GM12878 (cell line): ENCODE measurements at regions of chr14 and their contacts with region 1.

Region 1: DNA sequence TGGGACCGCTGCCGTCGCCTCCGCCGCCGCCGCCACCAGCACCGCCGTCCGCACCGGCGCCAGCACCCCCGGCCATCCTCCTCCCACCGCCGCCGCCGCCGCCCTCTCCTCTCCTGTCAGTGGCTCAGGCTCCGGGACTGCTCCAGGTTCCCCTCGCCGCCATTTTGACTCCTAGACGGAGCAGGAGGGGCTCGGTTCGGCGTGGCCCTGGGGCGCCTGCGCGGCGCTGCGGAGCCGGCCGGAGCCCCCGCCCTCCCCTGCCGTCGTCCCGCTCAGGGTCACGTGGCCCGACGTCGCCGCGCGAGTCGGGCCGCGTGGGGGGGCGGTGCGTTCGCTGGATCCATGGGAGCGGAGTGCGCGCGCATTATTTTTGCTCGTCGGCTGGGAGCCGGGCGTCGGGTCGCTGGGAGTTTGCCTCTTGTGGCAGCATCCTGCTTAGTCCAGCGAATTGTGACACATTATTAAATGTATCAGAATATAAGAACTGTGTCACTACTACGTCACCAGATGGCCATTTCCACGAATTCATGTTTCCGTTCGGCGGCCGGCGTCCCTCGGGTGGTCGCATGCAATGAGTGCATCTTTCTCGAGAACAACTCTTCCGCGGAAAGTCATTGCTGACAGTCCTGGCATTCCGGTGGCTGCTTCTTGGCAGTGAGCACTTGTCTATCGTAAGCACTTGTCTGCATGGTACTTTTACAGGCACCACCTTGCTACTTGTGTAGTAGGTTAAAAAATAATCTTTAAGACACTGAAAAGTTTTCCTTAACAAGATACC is at the start of gene BTBD7:
- DNase-seq: peak; percentile 63
- ATAC-seq: peak; percentile 89
- H3K4me3 ChIP-seq: peak within 1 kb of the TSS; percentile 86
- H3K27ac ChIP-seq: peak within 1 kb of the TSS; percentile 78
- H3K4me1 ChIP-seq: peaks cover 8% of the 10 kb centered on the region
- H3K27me3 ChIP-seq: no peaks in the 10 kb centered on the region
- CTCF ChIP-seq: peak in 2 of 3 experiments; percentile 4 to 9; a peak in 1 of 6 replicates
- EP300 ChIP-seq: no peak
- POLR2A ChIP-seq: peak; percentile 90
- RAD21 ChIP-seq: peak; percentile 16; the same call in 1 of the 2 replicates
- polyA plus RNA-seq, gene BTBD7: 3.6 to 6.0 TPM

Region 2: GRCh38 chr14:93295541-93296220 is 37.4 kb before region 1 on chr14:
- CTCF ChIA-PET with region 1: interaction called, 6 read pairs
- POLR2A ChIA-PET with region 1: interaction called, 6 read pairs
- RAD21 ChIA-PET with region 1: interaction called, 18 read pairs
- SMC1A ChIA-PET with region 1: interaction called, 20 read pairs
- in situ Hi-C with region 1: no loop called
- intact Hi-C with region 1: no loop called
- DNase-seq: no peak
- ATAC-seq: peak; percentile 31
- H3K4me3 ChIP-seq: no peak overlapping the region
- H3K27ac ChIP-seq: no peak overlapping the region
- H3K4me1 ChIP-seq: no peaks in the 10 kb centered on the region
- H3K27me3 ChIP-seq: no peaks in the 10 kb centered on the region
- CTCF ChIP-seq: no peak
- EP300 ChIP-seq: 0 out of 4 replicates have a peak, but pooled peaks of 1 of the 2 experiments have one; percentile 25
- POLR2A ChIP-seq: no peak
- RAD21 ChIP-seq: no peak

Region 3: DNA sequence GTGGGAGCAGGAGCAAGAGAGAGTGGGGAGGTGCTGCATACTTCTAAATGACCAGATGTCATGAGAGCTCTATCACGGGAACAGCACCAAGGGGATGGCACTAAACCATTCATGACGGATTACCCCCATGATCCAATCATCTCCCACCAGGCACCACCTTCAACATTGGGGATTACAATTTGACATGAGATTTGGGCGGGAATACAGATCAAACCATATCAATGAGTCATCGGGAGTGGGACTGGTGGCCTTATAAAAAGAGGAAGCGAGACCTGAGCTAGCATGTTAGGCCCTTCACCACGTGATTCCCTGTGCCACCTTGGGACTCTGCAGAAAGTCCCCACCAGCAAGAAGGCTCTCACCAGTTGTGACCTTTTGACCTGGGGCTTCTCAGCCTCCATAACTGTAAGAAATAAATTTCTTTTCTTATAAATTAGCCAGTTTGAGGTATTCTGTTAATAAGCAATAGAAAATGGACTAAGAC is 42.7 kb after region 1 on chr14:
- CTCF ChIA-PET with region 1: interaction called, 6 read pairs
- POLR2A ChIA-PET with region 1: no interaction called
- RAD21 ChIA-PET with region 1: interaction called, 9 read pairs
- SMC1A ChIA-PET with region 1: interaction called, 5 read pairs
- in situ Hi-C with region 1: no loop called
- intact Hi-C with region 1: loop called (anchors 1 kb)
- DNase-seq: peak; percentile 86
- ATAC-seq: peak; percentile 99
- H3K4me3 ChIP-seq: no peak overlapping the region
- H3K27ac ChIP-seq: peak overlapping the region; percentile 79
- H3K4me1 ChIP-seq: peaks cover 18% of the 10 kb centered on the region
- H3K27me3 ChIP-seq: no peaks in the 10 kb centered on the region
- CTCF ChIP-seq: no peak
- EP300 ChIP-seq: peak; percentile 89 to 93
- POLR2A ChIP-seq: no peak
- RAD21 ChIP-seq: no peak

Region 4: GRCh38 chr14:93533472-93534241 is 200.6 kb after region 1 on chr14:
- CTCF ChIA-PET with region 1: interaction called, 4 read pairs
- POLR2A ChIA-PET with region 1: interaction called, 5 read pairs
- RAD21 ChIA-PET with region 1: interaction called, 6 read pairs
- SMC1A ChIA-PET with region 1: interaction called, 9 read pairs
- in situ Hi-C with region 1: no loop called
- intact Hi-C with region 1: loop called (anchors 5 kb)
- DNase-seq: peak; percentile 47
- ATAC-seq: peak; percentile 92
- H3K4me3 ChIP-seq: no peak overlapping the region
- H3K27ac ChIP-seq: 0 out of 2 replicates have a peak overlapping the region, but pooled peaks have one; percentile 13
- H3K4me1 ChIP-seq: peaks cover 6% of the 10 kb centered on the region
- H3K27me3 ChIP-seq: no peaks in the 10 kb centered on the region
- CTCF ChIP-seq: no peak
- EP300 ChIP-seq: no peak; a peak in 2 of 4 replicates
- POLR2A ChIP-seq: no peak
- RAD21 ChIP-seq: no peak

Region 5: GRCh38 chr14:94129111-94129757 is 796.2 kb after region 1 on chr14 and contains the start of gene IFI27L2:
- CTCF ChIA-PET with region 1: no interaction called
- POLR2A ChIA-PET with region 1: no interaction called
- RAD21 ChIA-PET with region 1: no interaction called
- SMC1A ChIA-PET with region 1: no interaction called
- in situ Hi-C with region 1: no loop called
- intact Hi-C with region 1: no loop called
- DNase-seq: no peak
- ATAC-seq: peak; percentile 98
- H3K4me3 ChIP-seq: peak within 1 kb of the TSS; percentile 99
- H3K27ac ChIP-seq: peak within 1 kb of the TSS; percentile 67
- H3K4me1 ChIP-seq: peaks cover 10% of the 10 kb centered on the region; the same call in 1 of the 2 replicates
- H3K27me3 ChIP-seq: peaks cover 0 to 4% of the 10 kb centered on the region in 2 experiments; a peak in 1 of 4 replicates
- CTCF ChIP-seq: peak; percentile 4 to 46 (median 11); a peak in 1 of 6 replicates
- EP300 ChIP-seq: no peak
- POLR2A ChIP-seq: peak; percentile 82
- RAD21 ChIP-seq: no peak
- polyA plus RNA-seq, gene IFI27L2: 26.6 to 61.2 TPM